ENCODE measurements at regions of chr6 and their contacts with region 1.

Region 1: DNA sequence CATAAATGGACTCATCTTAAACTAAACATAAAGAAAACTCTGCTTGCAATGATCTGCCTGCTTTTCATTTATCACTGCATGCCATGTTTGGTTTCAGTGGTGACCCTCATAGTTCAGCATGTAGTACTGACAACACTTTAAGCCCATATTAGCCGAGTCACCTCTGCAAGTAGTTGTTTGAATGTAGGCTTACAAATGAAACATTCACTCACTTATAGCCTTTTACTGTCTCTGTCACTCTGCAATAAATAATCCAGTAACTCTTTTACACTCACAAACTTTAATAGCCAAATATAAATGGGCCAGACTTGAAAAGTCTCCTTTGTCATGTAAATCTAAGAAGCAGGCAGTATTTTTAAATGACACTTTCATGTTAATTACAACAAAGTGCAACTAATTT is 1460.0 kb upstream of the ADGRB3 start:
- DNase-seq: no peak
- H3K4me3 ChIP-seq: no peak overlapping the region
- H3K27ac ChIP-seq: no peak overlapping the region
- H3K4me1 ChIP-seq: no peaks in the 10 kb centered on the region
- H3K27me3 ChIP-seq: no peaks in the 10 kb centered on the region
- CTCF ChIP-seq: no peak

Region 2: GRCh38 chr6:66964216-66964615 is 210.9 kb before region 1 on chr6:
- CTCF ChIA-PET with region 1: no interaction called
- POLR2A ChIA-PET with region 1: no interaction called
- intact Hi-C with region 1: no loop called
- DNase-seq: no peak
- H3K4me3 ChIP-seq: no peak overlapping the region
- H3K27ac ChIP-seq: no peak overlapping the region
- H3K4me1 ChIP-seq: no peaks in the 10 kb centered on the region
- H3K27me3 ChIP-seq: no peaks in the 10 kb centered on the region
- CTCF ChIP-seq: no peak

Region 3: DNA sequence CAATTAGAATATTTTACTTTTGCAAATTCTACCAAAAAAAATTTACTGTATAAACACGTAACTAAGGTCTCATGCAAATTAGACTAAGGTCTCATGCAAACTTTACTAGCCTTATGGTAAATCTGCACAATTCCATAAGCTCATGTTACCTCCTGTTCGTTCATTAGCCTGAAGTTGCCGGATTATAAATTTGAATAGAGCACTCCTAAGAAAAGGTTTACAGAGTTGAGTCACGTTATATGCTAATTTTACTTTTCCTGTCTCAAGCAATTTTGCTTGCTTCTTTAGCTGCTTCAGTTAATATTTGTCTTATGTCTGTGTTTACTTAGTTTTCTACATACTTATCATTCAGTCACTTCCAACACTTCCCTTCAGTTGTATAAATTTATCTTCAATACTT is 34.1 kb before region 1 on chr6:
- CTCF ChIA-PET with region 1: no interaction called
- POLR2A ChIA-PET with region 1: no interaction called
- intact Hi-C with region 1: loop called (anchors 2 kb)
- DNase-seq: no peak
- H3K4me3 ChIP-seq: no peak overlapping the region
- H3K27ac ChIP-seq: no peak overlapping the region
- H3K4me1 ChIP-seq: no peaks in the 10 kb centered on the region
- H3K27me3 ChIP-seq: no peaks in the 10 kb centered on the region
- CTCF ChIP-seq: no peak

Region 4: DNA sequence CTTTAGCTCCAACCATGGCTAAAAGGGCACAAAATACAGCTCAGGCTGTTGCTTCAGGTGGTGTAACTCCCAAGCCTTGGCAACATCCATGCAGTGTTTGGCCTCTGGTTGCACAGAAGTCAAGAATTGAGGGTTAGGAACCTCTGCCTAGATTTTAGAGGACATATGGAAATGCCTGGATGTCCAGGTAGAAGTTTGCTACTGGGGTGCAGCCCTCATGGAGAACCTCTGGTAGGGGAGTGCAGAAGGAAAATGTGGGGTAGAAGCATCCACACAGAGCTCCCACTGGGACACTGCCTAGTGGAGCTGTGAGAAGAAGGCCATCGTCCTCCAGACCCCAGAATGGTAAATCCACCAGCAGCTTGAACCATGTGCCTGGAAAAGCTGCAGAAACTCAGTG is 14.3 kb before region 1 on chr6:
- CTCF ChIA-PET with region 1: no interaction called
- POLR2A ChIA-PET with region 1: no interaction called
- intact Hi-C with region 1: no loop called
- DNase-seq: no peak
- H3K4me3 ChIP-seq: no peak overlapping the region
- H3K27ac ChIP-seq: no peak overlapping the region
- H3K4me1 ChIP-seq: no peaks in the 10 kb centered on the region
- H3K27me3 ChIP-seq: no peaks in the 10 kb centered on the region
- CTCF ChIP-seq: no peak

Region 5: GRCh38 chr6:67221226-67221625 is 46.2 kb after region 1 on chr6:
- CTCF ChIA-PET with region 1: no interaction called
- POLR2A ChIA-PET with region 1: no interaction called
- intact Hi-C with region 1: no loop called
- DNase-seq: no peak
- H3K4me3 ChIP-seq: no peak overlapping the region
- H3K27ac ChIP-seq: no peak overlapping the region
- H3K4me1 ChIP-seq: no peaks in the 10 kb centered on the region
- H3K27me3 ChIP-seq: no peaks in the 10 kb centered on the region
- CTCF ChIP-seq: no peak

Region 6: GRCh38 chr6:67541586-67541985 is 366.5 kb after region 1 on chr6:
- CTCF ChIA-PET with region 1: no interaction called
- POLR2A ChIA-PET with region 1: no interaction called
- intact Hi-C with region 1: no loop called
- DNase-seq: no peak
- H3K4me3 ChIP-seq: no peak overlapping the region
- H3K27ac ChIP-seq: no peak overlapping the region
- H3K4me1 ChIP-seq: no peaks in the 10 kb centered on the region
- H3K27me3 ChIP-seq: no peaks in the 10 kb centered on the region
- CTCF ChIP-seq: no peak